Breast epithelium (tissue), 4 donors: ENCODE measurements at regions of chr22 and their contacts with region 1.

Region 1: DNA sequence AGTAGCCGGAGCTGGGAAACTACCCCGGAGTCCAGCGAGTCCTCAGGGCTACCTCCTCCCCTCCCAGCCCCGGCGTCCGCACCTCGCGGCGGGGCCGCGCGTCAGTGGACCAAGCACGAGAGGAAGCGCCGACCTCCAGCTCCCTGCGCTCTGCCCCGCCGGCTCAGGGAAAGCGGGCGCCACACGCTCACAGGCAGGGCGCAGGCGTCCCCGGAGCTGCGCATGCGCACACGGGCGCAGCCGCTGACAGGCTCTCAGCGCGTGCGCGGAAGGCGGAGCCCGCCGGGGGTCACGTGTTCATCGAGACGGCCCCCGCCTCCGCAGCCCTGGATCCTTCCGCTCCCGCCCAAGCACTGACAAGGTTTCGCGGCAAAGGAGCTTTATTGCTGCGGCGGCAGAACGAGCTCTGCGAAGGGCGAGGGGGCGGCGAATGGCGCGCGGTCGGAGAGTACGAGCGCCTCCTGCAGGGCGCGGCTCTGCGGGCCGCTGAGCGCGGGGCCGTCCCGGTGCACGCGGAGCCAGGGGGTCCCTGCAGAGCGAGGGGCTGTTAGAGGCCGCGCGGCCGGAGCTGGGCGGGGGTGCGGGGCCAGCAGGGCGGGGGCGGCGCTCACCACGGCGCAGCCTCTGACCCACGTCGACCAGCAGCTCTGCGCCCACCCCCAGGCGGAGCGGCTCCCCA is at the start of gene SCO2:
- DNase-seq: peak; percentile 94 to 96
- H3K4me3 ChIP-seq: peak within 1 kb of the TSS; percentile 52 to 91 (median 81)
- H3K27ac ChIP-seq: peak within 1 kb of the TSS; percentile 88 to 92
- H3K4me1 ChIP-seq: peaks cover 10 to 12% of the 10 kb centered on the region in 2 donors
- H3K27me3 ChIP-seq: no peaks in the 10 kb centered on the region
- CTCF ChIP-seq: peak in 2 of 3 donors; percentile 26 to 41
- POLR2A ChIP-seq: peak; percentile 47
- total RNA-seq, gene SCO2: 1.9 to 6.6 (median 4.3) TPM

Region 2: GRCh38 chr22:50435291-50436014 is 90.1 kb before region 1 on chr22:
- intact Hi-C with region 1: no loop called
- DNase-seq: peak in 1 of 2 donors; percentile 73
- H3K4me3 ChIP-seq: no peak overlapping the region
- H3K27ac ChIP-seq: peak overlapping the region; percentile 19 to 50
- H3K4me1 ChIP-seq: no peaks in the 10 kb centered on the region
- H3K27me3 ChIP-seq: no peaks in the 10 kb centered on the region
- CTCF ChIP-seq: no peak
- POLR2A ChIP-seq: no peak

Region 3: GRCh38 chr22:50582562-50583293 is 57.2 kb after region 1 on chr22 and contains the start of gene CHKB:
- intact Hi-C with region 1: loop called (anchors 5 kb)
- DNase-seq: peak; percentile 98
- H3K4me3 ChIP-seq: peak within 1 kb of the TSS; percentile 75 to 86 (median 83)
- H3K27ac ChIP-seq: peak within 1 kb of the TSS; percentile 95 to 97
- H3K4me1 ChIP-seq: peaks cover 0 to 8% of the 10 kb centered on the region in 2 donors
- H3K27me3 ChIP-seq: no peaks in the 10 kb centered on the region
- CTCF ChIP-seq: no peak
- POLR2A ChIP-seq: peak; percentile 69
- total RNA-seq, gene CHKB: 53.9 to 77.6 (median 71.4) TPM

Region 4: DNA sequence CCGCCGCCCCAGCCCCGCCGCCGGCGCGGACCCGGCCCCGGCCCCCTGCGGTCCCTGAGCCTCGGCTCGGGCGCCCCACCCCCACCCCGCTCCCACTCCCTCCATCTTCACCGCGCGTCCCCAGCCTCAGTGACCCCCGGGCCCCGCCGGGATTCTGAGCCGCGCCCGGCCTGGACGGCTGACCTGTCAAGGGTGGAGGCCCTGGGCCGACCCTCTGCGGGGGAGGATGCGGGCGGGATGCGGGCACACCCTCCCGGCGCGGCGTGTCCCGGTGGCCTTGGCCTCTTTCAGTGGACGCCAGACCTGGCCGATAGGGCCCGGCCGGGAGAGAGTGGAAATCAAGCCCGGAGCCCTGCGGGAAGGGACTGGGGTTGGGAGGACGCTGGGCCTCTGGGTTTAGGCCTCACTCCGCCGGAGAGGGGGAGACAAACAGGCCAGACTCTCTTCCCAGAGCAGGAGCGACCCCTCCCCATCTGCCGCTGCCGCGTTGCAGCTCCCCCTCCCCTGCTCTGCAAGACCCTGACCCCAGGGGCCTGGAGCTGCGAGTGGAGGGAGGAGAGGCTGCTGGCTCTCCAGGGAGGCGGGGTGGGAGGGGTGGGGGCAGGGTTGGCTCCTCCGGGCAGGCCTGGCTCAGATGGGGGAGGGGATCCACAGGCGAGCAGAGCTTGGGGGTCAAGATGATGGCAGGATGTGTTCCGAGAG is 75.6 kb after region 1 on chr22:
- intact Hi-C with region 1: loop called (anchors 1 kb)
- DNase-seq: no peak
- H3K4me3 ChIP-seq: peak overlapping the region; percentile 34 to 75 (median 55)
- H3K27ac ChIP-seq: no peak overlapping the region
- H3K4me1 ChIP-seq: peaks cover 4 to 5% of the 10 kb centered on the region in 2 donors
- H3K27me3 ChIP-seq: peaks cover 0 to 7% of the 10 kb centered on the region in 2 donors
- CTCF ChIP-seq: no peak
- POLR2A ChIP-seq: no peak